Psoas muscle (tissue), 8 donors: ENCODE measurements at regions of chr3 and their contacts with region 1.

Region 1: GRCh38 chr3:38479431-38480092 is 16.6 kb upstream of the EXOG start:
- DNase-seq: peak; percentile 66 to 79
- ATAC-seq: peak; percentile 88 to 98 (median 92)
- H3K4me3 ChIP-seq: no peak overlapping the region
- H3K27ac ChIP-seq: no peak overlapping the region
- H3K4me1 ChIP-seq: peaks cover 4% of the 10 kb centered on the region
- H3K27me3 ChIP-seq: no peaks in the 10 kb centered on the region
- CTCF ChIP-seq: peak; percentile 90

Region 2: DNA sequence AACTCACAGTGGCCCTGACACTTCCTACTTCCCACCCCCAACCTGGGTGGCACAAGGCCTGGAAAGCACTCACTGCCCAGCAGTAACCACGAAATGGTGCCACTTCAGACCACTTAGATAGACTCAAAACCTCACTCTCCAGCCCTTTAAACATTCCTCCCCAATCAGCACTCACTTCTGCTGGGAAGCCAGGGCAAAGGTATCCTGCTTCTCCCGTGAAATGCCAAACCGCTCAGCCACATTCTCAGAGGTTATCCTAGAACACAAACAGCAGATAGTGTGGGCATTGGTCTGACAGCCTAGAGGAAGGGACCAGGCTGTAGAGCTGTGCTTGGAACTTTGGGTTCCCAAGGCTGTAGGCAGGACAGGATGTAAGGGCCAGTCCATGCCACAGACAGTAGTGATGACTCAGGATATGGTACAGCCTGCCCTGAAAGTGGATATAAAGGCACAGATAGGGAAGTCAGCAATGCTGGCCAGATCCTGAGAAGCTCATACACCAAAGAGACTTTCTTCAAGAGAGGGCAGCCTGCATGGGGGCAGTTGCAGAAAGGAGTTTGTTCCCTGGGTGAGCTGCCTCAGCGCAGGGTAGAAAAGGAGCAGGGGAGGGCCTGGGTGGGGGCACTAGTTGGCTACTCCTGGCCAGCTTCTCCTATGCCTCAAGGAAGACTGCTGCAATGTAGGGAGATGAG is 351.8 kb before region 1 on chr3:
- intact Hi-C with region 1: loop called in 1 of 2 experiments (anchors 10 kb)
- DNase-seq: no peak
- ATAC-seq: no peak
- H3K4me3 ChIP-seq: no peak overlapping the region
- H3K27ac ChIP-seq: no peak overlapping the region
- H3K4me1 ChIP-seq: no peaks in the 10 kb centered on the region
- H3K27me3 ChIP-seq: no peaks in the 10 kb centered on the region
- CTCF ChIP-seq: no peak

Region 3: DNA sequence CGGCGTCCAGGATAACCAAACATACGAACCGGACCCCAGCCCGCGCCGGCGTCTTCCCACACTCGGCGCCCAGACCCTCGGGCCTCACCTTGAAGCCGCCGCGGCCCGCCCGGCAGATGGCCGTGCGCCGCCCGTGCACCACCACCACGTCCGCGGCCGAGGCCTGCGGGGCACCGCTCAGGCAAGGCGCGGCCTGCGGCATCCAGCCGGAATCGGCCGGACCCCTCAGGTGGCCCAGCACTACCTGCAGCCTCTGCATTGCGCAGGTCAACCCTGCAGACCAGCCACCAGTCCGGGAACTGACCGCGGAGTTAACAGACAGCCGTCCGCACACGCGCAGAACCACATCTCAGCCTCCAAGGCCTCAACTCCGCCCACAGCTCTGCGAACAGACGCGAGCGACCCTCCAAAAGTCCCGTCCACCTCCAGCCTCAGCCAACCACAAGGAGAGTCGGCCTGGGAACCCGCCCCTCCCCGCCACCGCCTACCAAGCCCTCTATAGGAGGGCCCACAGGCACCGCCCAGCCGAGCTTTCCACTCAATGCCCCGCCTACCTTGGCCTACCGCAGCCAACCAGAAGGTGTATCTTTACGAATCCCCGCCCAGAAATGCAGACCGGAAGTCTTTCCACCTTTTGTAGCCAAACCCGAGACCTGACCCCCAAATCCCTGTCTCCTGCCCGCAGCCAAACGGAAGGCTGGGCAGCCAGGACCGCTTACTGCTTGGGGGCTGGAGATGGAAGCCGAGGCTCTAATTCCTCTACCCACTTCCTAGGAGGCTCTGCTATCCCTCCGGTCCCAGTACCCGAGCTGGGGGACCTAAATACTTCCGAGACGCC is 342.6 kb before region 1 on chr3 and contains the start of gene ACAA1:
- intact Hi-C with region 1: loop called in 1 of 2 experiments (anchors 5 kb)
- DNase-seq: peak; percentile 99 to 100
- ATAC-seq: peak; percentile 96 to 97 (median 97)
- H3K4me3 ChIP-seq: peak within 1 kb of the TSS; percentile 99
- H3K27ac ChIP-seq: peak within 1 kb of the TSS; percentile 94
- H3K4me1 ChIP-seq: peaks cover 16% of the 10 kb centered on the region
- H3K27me3 ChIP-seq: no peaks in the 10 kb centered on the region
- CTCF ChIP-seq: no peak
- total RNA-seq, gene ACAA1: 34.9 to 48.6 (median 40.7) TPM

Region 4: DNA sequence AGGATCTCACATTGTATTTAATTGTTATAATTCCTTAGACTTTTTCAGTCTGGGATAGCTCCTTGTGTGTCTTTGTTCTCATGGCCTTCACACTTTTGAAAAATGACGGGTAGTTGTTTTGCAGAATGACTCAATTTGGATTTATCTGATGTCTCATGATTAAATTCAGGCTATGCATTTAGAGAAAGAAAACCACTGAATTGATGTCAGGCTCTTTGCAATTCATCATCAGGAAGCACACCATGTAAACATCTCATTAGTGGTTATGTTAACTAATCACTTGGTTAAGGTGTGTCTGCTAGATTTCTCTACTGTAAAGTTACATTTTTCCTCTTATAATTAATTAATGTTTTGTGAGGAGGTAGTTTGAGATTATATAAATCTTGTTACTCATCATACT is 222.0 kb before region 1 on chr3:
- intact Hi-C with region 1: loop called in 1 of 2 experiments (anchors 10 kb)
- DNase-seq: no peak
- ATAC-seq: no peak
- H3K4me3 ChIP-seq: no peak overlapping the region
- H3K27ac ChIP-seq: no peak overlapping the region
- H3K4me1 ChIP-seq: no peaks in the 10 kb centered on the region
- H3K27me3 ChIP-seq: no peaks in the 10 kb centered on the region
- CTCF ChIP-seq: no peak

Region 5: DNA sequence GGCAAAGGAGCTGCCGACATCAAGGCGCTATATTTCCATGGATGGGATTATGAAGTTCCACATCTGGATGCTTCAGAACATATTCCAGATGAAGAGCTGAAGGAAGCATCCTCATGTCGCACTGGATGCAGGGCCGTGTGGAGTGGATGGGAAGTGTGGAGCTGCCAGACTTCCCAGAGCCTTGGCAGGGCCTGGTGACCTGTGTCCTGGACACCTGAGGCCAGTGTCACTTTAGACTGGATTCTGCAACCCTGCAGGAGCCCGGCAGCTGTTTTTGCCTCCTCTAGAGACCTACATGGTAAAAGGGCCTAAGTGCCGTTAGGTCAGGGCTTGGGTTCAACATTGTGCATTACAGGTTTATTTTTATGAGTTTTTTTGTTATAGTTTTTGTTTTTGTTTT is 144.3 kb before region 1 on chr3:
- intact Hi-C with region 1: no loop called
- DNase-seq: no peak
- ATAC-seq: no peak
- H3K4me3 ChIP-seq: no peak overlapping the region
- H3K27ac ChIP-seq: no peak overlapping the region
- H3K4me1 ChIP-seq: no peaks in the 10 kb centered on the region
- H3K27me3 ChIP-seq: no peaks in the 10 kb centered on the region
- CTCF ChIP-seq: no peak

Region 6: GRCh38 chr3:38346587-38347410 is 132.8 kb before region 1 on chr3 and contains the start of gene XYLB:
- intact Hi-C with region 1: loop called (anchors 2 kb)
- DNase-seq: peak; percentile 90 to 92
- ATAC-seq: peak; percentile 99 to 100 (median 99)
- H3K4me3 ChIP-seq: peak within 1 kb of the TSS; percentile 88
- H3K27ac ChIP-seq: peak within 1 kb of the TSS; percentile 44
- H3K4me1 ChIP-seq: peaks cover 5% of the 10 kb centered on the region
- H3K27me3 ChIP-seq: no peaks in the 10 kb centered on the region
- CTCF ChIP-seq: peak; percentile 84
- total RNA-seq, gene XYLB: 0.78 to 1.3 (median 1.3) TPM

Region 7: DNA sequence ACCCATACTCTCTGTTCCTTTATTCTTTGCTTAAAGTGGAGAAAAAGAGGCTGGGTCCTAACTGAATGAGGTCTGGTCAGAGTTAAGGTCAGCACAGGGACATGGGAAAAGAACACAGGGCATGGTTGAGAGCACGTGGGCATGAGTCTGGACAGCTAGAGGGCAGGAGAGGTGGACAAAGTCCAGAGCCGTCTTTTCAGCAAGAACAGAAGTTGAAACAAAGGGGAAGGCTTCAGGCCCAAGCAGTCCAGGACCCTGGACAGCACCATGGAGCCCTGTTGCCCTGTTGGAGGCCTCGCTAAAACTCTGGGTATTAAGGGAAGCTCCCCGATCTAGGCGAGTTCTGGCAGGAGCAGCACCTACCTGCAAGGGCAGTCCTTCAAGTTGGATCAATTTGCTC is 82.2 kb before region 1 on chr3:
- intact Hi-C with region 1: loop called in 1 of 2 experiments (anchors 10 kb)
- DNase-seq: no peak
- ATAC-seq: no peak
- H3K4me3 ChIP-seq: no peak overlapping the region
- H3K27ac ChIP-seq: no peak overlapping the region
- H3K4me1 ChIP-seq: no peaks in the 10 kb centered on the region
- H3K27me3 ChIP-seq: no peaks in the 10 kb centered on the region
- CTCF ChIP-seq: no peak

Region 8: GRCh38 chr3:38411591-38411990 is 68.0 kb before region 1 on chr3:
- intact Hi-C with region 1: no loop called
- DNase-seq: no peak
- ATAC-seq: no peak
- H3K4me3 ChIP-seq: no peak overlapping the region
- H3K27ac ChIP-seq: no peak overlapping the region
- H3K4me1 ChIP-seq: no peaks in the 10 kb centered on the region
- H3K27me3 ChIP-seq: no peaks in the 10 kb centered on the region
- CTCF ChIP-seq: no peak